HEK293T (cell line): ENCODE measurements at regions of chr11 and their contacts with region 1.

Region 1: GRCh38 chr11:129375751-129376657 is at the start of gene BARX2:
- DNase-seq: peak; percentile 59

Region 2: GRCh38 chr11:129364143-129364654 is 11.8 kb before region 1 on chr11:
- CTCF ChIA-PET with region 1: interaction called, 13 read pairs
- POLR2A ChIA-PET with region 1: interaction called, 5 read pairs
- DNase-seq: peak; percentile 85

Region 3: DNA sequence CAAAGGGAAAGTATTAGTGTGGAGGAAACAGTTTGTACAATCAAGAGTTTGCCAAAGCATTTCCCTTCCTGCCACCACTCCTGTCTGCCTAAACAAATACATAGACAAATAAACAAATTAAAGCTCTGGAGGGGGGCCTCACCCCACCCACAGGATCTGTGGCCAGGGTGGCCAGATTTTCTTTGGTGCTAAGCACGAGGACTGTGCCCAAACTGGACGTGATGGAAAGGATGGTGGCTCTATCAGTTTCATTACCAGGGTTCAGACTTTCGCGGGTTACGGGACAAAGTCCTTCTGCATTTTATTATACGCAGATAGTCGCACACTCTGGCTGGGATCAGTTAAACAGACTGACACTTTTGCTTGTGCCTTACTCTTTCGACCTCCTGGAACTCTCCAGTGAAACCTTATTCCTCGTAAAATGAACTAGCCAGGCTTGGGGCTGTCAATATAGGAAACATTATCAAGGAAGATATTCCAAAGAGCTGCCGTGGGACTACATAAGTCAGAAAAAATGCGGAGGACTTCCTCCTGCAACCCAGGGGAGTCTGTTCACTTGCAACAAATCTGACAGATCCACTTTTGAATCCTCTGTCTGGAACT is 10.9 kb after region 1 on chr11:
- CTCF ChIA-PET with region 1: interaction called, 3 read pairs
- POLR2A ChIA-PET with region 1: interaction called, 11 read pairs
- DNase-seq: no peak

Region 4: DNA sequence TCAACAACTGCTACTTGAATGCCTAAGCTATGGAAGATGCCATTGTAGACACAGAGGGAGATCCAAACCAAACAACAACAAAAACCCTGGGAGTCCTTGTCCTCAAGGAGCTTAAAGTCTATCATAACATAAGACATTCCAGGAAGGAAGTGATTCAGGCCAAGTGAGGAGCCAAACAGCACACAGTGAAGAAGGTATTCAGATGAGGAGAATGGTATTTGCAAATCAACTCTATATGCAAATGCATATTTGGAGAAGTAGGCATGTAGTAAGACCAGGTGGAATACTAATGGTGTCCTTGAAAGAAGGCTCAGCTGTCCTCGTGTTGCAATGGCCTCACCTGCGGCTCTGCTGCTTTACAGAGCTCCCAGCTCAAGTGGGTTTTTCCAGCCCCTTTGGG is 26.8 kb after region 1 on chr11:
- CTCF ChIA-PET with region 1: no interaction called
- POLR2A ChIA-PET with region 1: no interaction called
- DNase-seq: no peak

Region 5: DNA sequence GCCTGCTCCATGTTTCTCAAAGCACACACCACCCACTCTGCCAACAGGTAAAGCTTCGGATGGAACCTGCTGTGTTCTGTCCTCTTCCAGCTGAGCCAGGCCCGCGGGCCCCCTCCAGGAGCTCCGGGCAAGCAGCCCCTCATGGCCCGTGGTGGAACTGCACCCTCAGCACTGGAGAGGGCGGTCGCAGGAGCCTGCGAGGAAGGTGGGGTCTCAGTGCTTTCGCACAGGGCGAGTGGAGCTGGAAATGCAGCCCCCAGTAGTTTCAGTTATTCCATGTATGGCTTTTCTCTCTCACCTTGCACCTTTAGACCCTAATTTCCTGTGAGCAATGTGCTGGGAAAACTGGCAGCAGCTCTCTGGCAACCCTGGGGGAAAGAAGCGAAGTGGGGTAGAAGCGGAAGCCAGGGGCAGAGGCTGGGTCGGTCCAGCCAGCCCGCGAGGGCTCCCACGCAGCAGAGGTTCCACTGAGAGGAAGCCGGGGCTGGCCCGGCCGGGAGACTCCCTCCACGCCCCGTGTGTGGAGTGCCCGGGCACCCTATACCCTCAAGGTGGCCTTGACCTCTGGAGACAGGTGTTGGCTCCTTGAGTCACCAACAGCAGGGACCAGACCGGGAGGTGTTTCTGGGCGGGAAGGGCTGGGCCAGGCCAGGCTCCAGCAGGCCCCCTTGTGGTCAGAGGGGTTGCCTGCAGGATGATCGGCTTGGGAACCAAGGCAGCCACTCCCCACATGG is 319.7 kb after region 1 on chr11:
- CTCF ChIA-PET with region 1: interaction called, 10 read pairs
- POLR2A ChIA-PET with region 1: interaction called, 4 read pairs
- DNase-seq: peak; percentile 73